ENCODE measurements at regions of chr11 and their contacts with region 1.

Region 1: DNA sequence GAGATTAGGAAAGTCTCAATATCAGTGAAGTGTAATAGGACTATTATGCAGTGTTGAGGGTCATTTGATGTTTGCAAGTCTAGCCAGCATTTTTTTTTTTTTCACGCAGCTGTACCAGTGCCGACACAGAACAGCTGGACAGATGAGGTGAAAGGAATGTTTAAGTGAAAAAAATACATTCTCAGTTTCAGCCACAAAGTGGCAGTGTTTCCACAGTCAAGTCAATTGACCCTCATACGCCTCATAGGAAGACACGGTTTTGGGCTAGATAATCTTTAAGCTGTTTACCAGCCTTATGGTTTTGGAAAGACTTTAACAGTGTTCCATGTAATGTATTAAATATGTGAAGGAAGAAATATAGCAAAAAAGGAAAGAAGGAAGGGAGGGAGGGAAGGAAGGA is 349.9 kb upstream of the ANO3 start:
- DNase-seq: no peak
- H3K4me3 Mint-ChIP-seq: no peak overlapping the region
- H3K27ac Mint-ChIP-seq: no peak overlapping the region
- H3K4me1 Mint-ChIP-seq: no peaks in the 10 kb centered on the region
- H3K27me3 Mint-ChIP-seq: no peaks in the 10 kb centered on the region

Region 2: GRCh38 chr11:26276798-26277424 is 294.9 kb after region 1 on chr11:
- intact Hi-C with region 1: loop called (anchors 2 kb)
- DNase-seq: peak; percentile 20
- H3K4me3 Mint-ChIP-seq: no peak overlapping the region
- H3K27ac Mint-ChIP-seq: no peak overlapping the region
- H3K4me1 Mint-ChIP-seq: peaks cover 2% of the 10 kb centered on the region
- H3K27me3 Mint-ChIP-seq: no peaks in the 10 kb centered on the region

Measured in activated T-helper 2 cell treated with anti-CD3 and anti-CD28 coated beads, Interferon-gamma antibody, Interleukin-2, Interleukin-4, amounts not matched to agents 10 μg/mL and 5 μg/mL and 100 μg/mL, durations not matched to agents 14 hours and 24 hours and 36 hours (primary cell).